Mammary epithelial cell (primary cell): ENCODE measurements at regions of chr7 and their contacts with region 1.

Region 1: DNA sequence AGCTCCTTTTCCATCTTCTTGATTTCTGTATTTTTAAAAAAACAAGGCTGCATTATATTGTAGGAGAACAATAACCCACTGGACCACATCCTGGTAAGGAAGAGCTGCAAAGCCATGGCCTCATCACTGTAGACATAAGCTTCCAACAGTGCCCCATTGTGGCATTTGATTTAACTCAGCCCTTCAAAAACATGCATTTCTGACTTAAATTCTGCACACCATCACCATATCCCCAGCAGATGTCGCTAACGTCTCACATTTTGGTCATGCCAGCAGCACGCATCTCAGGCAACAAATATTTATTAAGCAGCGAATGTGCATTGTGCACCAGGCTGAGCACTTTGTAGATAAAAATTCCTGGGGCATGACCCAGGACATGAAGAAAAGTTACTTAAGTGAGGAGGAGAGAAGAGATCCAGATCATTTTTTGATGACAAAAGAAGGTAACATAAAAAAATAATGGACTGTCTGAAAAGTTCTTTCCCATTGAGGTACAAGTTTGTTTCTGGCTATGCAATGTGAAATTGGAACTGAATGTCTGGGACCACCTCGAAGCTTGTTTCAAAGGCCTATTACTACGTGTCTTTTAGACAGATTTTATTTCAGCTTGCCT is 164.6 kb upstream of the CDCA7L start:
- DNase-seq: peak; percentile 66
- H3K4me3 ChIP-seq: no peak overlapping the region
- H3K27ac ChIP-seq: no peak overlapping the region
- H3K4me1 ChIP-seq: no peaks in the 10 kb centered on the region
- H3K27me3 ChIP-seq: no peaks in the 10 kb centered on the region
- CTCF ChIP-seq: peak; percentile 79 to 86

Region 2: GRCh38 chr7:22499044-22499443 is 388.7 kb after region 1 on chr7:
- CTCF ChIA-PET with region 1: no interaction called
- dilution Hi-C with region 1: no loop called
- in situ Hi-C with region 1: no loop called
- intact Hi-C with region 1: loop called (anchors 1 kb)
- DNase-seq: no peak
- H3K4me3 ChIP-seq: no peak overlapping the region
- H3K27ac ChIP-seq: no peak overlapping the region
- H3K4me1 ChIP-seq: peaks cover 3% of the 10 kb centered on the region
- H3K27me3 ChIP-seq: no peaks in the 10 kb centered on the region
- CTCF ChIP-seq: no peak